Activated B cell treated with CpG ODN at 0.5 μM for 24 hours (primary cell): ENCODE measurements at regions of chr12 and their contacts with region 1.

Region 1: GRCh38 chr12:2004113-2004929 is at the start of gene DCP1B:
- DNase-seq: peak; percentile 83
- ATAC-seq: peak; percentile 99
- H3K4me3 Mint-ChIP-seq: peak within 1 kb of the TSS; percentile 99
- H3K27ac Mint-ChIP-seq: peak within 1 kb of the TSS; percentile 98
- H3K4me1 Mint-ChIP-seq: peaks cover 26% of the 10 kb centered on the region
- H3K27me3 Mint-ChIP-seq: no peaks in the 10 kb centered on the region
- CTCF ChIP-seq: no peak
- total RNA-seq, gene DCP1B: 12.4 and 14.7 TPM in 2 replicates

Region 2: DNA sequence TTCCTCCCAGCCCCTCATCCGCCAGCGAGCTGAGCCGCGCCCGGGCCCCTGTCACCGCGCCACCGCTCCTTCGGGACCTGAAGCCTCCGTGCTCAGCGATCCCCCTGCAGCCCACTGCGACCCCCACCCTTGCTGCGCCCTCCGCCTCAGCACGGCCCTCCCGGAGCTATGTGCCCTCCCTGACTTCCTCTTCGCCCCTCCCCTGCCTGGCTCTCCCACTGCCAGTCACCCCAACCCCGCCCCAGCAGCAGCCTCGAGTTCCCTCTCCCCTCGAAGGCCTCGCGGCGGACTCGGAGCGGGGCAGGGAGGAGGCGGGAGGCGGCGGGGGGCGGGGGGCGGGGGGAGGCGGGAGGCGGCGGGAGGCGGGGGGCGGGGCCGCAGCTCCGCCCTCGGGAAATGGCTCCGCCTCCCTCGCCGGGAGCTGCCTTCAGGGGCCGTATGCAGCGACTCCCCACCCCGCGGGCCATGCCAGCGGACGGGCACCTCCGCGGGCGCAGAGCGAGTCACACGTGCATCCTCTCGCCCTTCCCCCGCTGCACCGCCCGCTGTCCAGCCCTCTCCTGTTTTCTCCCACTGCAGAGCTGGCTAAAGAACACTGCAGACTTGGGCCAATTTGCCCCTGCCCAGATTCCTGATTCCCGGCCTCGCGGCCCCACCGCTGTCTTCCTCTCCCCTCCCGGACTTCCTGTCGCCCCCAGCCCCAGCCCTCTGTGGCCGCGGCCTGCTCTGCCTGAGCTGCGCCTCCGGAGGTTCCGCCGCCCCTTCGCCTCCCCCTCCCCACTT is 342.6 kb before region 1 on chr12:
- CTCF ChIA-PET with region 1: no interaction called
- POLR2A ChIA-PET with region 1: interaction called, 4 read pairs
- intact Hi-C with region 1: loop called (anchors 1 kb)
- DNase-seq: peak; percentile 75
- ATAC-seq: peak; percentile 93
- H3K4me3 Mint-ChIP-seq: peak overlapping the region; percentile 84
- H3K27ac Mint-ChIP-seq: peak overlapping the region; percentile 84
- H3K4me1 Mint-ChIP-seq: peaks cover 18% of the 10 kb centered on the region
- H3K27me3 Mint-ChIP-seq: no peaks in the 10 kb centered on the region
- CTCF ChIP-seq: no peak

Region 3: DNA sequence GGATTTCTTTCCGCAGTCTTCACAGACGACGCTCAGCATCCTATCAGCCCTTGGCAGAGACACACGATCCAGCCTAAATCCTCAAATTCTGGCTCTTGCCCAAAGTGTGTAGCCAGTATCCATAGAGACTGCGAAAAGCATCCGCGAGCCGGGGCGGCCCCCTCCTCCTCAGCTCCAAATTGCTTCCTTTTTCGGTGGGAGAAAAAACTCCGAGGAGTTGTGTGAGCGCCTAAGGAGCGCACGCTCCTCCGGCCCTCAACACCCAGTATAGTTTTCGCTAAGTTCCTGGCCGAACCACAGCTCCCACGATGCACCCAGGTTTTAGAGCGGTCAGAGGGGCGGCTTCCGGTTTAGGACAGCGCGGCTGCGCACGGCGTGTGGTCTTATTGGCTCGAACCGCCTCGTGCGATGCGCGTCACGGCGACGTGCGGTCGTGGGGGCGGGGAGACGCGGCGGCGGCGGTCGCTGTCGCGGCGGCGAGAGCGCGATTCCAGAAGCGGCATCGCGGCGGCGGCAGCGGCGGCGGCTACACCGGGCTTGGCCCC is 313.7 kb before region 1 on chr12 and contains the start of gene ADIPOR2:
- CTCF ChIA-PET with region 1: no interaction called
- POLR2A ChIA-PET with region 1: no interaction called
- intact Hi-C with region 1: loop called (anchors 1 kb)
- DNase-seq: peak; percentile 94
- ATAC-seq: peak; percentile 96
- H3K4me3 Mint-ChIP-seq: peak within 1 kb of the TSS; percentile 88
- H3K27ac Mint-ChIP-seq: peak within 1 kb of the TSS; percentile 98
- H3K4me1 Mint-ChIP-seq: peaks cover 39% of the 10 kb centered on the region
- H3K27me3 Mint-ChIP-seq: peaks cover 5% of the 10 kb centered on the region
- CTCF ChIP-seq: no peak
- total RNA-seq, gene ADIPOR2: 43.0 and 43.1 TPM in 2 replicates

Region 4: GRCh38 chr12:2034633-2035430 is 30.5 kb after region 1 on chr12:
- CTCF ChIA-PET with region 1: interaction called, 4 read pairs
- POLR2A ChIA-PET with region 1: no interaction called
- intact Hi-C with region 1: loop called (anchors 2 kb)
- DNase-seq: peak; percentile 79
- ATAC-seq: peak; percentile 100
- H3K4me3 Mint-ChIP-seq: peak overlapping the region; percentile 70
- H3K27ac Mint-ChIP-seq: no peak overlapping the region
- H3K4me1 Mint-ChIP-seq: peaks cover 10% of the 10 kb centered on the region
- H3K27me3 Mint-ChIP-seq: peaks cover 69% of the 10 kb centered on the region
- CTCF ChIP-seq: no peak

Region 5: GRCh38 chr12:2125651-2126522 is 121.6 kb after region 1 on chr12:
- CTCF ChIA-PET with region 1: no interaction called
- POLR2A ChIA-PET with region 1: no interaction called
- intact Hi-C with region 1: no loop called
- DNase-seq: no peak
- ATAC-seq: no peak
- H3K4me3 Mint-ChIP-seq: no peak overlapping the region
- H3K27ac Mint-ChIP-seq: no peak overlapping the region
- H3K4me1 Mint-ChIP-seq: no peaks in the 10 kb centered on the region
- H3K27me3 Mint-ChIP-seq: no peaks in the 10 kb centered on the region
- CTCF ChIP-seq: no peak

Region 6: GRCh38 chr12:3398196-3398789 is 1394.0 kb after region 1 on chr12:
- CTCF ChIA-PET with region 1: no interaction called
- POLR2A ChIA-PET with region 1: no interaction called
- intact Hi-C with region 1: no loop called
- DNase-seq: no peak
- ATAC-seq: no peak
- H3K4me3 Mint-ChIP-seq: no peak overlapping the region
- H3K27ac Mint-ChIP-seq: no peak overlapping the region
- H3K4me1 Mint-ChIP-seq: no peaks in the 10 kb centered on the region
- H3K27me3 Mint-ChIP-seq: peaks cover 17% of the 10 kb centered on the region
- CTCF ChIP-seq: no peak